Breast epithelium (tissue), 4 donors: ENCODE measurements at regions of chr1 and their contacts with region 1.

Region 1: DNA sequence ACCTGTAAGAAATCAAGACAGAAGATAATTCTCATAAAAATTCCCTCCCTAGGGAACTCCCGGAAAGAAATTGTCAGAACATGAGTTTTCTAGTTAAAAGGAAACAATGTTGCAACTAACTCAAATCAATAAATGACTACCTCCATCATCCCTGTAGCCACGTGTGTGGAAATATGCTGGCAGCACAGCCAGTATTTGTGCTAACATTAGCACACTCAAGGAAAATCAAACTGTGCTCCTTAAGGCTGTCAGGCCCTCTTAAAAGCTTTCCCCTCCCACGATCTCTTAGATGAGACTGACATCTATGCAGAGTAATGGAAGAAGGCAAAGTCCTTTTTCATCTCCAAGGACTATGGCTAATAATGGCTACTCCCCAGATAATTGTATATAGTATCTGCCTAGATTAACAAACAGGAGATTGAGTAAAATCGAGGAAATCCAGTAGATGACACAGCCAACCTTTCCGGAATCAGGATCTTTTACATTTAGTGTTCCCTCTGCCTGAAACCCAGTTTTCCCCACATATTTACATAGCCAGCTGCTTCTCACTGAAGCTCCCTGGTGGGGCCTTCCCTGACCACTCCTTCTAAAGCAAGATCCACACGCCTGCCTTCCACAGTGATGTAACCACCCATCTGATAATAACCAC is 50.9 kb upstream of the NR5A2 start:
- DNase-seq: no peak
- H3K4me3 ChIP-seq: no peak overlapping the region
- H3K27ac ChIP-seq: no peak overlapping the region
- H3K4me1 ChIP-seq: no peaks in the 10 kb centered on the region
- H3K27me3 ChIP-seq: no peaks in the 10 kb centered on the region
- CTCF ChIP-seq: no peak
- POLR2A ChIP-seq: no peak

Region 2: GRCh38 chr1:199821026-199821779 is 155.4 kb before region 1 on chr1:
- intact Hi-C with region 1: loop called (anchors 10 kb)
- DNase-seq: no peak
- H3K4me3 ChIP-seq: no peak overlapping the region
- H3K27ac ChIP-seq: no peak overlapping the region
- H3K4me1 ChIP-seq: no peaks in the 10 kb centered on the region
- H3K27me3 ChIP-seq: no peaks in the 10 kb centered on the region
- CTCF ChIP-seq: no peak
- POLR2A ChIP-seq: no peak

Region 3: GRCh38 chr1:200029035-200029821 is 52.6 kb after region 1 on chr1:
- intact Hi-C with region 1: no loop called
- DNase-seq: no peak
- H3K4me3 ChIP-seq: peak overlapping the region; percentile 36 to 61 (median 40)
- H3K27ac ChIP-seq: no peak overlapping the region
- H3K4me1 ChIP-seq: no peaks in the 10 kb centered on the region
- H3K27me3 ChIP-seq: peaks cover 0 to 58% of the 10 kb centered on the region in 2 donors
- CTCF ChIP-seq: no peak
- POLR2A ChIP-seq: no peak

Region 4: GRCh38 chr1:200354243-200354642 is 377.6 kb after region 1 on chr1:
- intact Hi-C with region 1: no loop called
- DNase-seq: no peak
- H3K4me3 ChIP-seq: no peak overlapping the region
- H3K27ac ChIP-seq: no peak overlapping the region
- H3K4me1 ChIP-seq: no peaks in the 10 kb centered on the region
- H3K27me3 ChIP-seq: no peaks in the 10 kb centered on the region
- CTCF ChIP-seq: no peak
- POLR2A ChIP-seq: no peak

Region 5: DNA sequence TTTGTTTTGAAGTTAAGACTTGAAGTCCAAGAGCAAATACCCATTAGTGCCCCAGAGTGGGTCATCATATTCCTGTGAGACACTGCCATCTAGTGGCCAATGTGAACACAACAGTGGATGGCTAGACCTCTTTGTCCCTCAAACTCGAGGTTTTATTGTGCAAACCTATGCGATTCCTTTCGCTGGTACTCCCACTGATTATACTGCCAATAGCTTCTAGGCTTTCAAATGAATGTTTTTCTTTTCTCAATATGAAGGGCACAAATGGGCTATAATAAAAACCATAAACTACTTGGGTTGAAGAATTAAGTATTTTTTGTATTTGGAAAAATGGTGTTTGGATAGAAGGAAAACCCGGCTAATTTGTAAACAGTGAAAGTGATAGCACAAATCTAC is 533.6 kb after region 1 on chr1:
- intact Hi-C with region 1: no loop called
- DNase-seq: peak in 1 of 2 donors; percentile 46
- H3K4me3 ChIP-seq: no peak overlapping the region
- H3K27ac ChIP-seq: no peak overlapping the region
- H3K4me1 ChIP-seq: no peaks in the 10 kb centered on the region
- H3K27me3 ChIP-seq: peaks cover 0 to under 1% of the 10 kb centered on the region in 2 donors
- CTCF ChIP-seq: peak; percentile 64 to 84 (median 80)
- POLR2A ChIP-seq: no peak